B cell (primary cell): ENCODE measurements at regions of chr5 and their contacts with region 1.

Region 1: GRCh38 chr5:68170826-68171558 is 44.6 kb upstream of the PIK3R1 start:
- DNase-seq: no peak
- ATAC-seq: no peak
- H3K4me3 ChIP-seq: no peak overlapping the region
- H3K4me3 Mint-ChIP-seq: no peak overlapping the region
- H3K27ac ChIP-seq: no peak overlapping the region
- H3K27ac Mint-ChIP-seq: no peak overlapping the region
- H3K4me1 ChIP-seq: no peaks in the 10 kb centered on the region
- H3K4me1 Mint-ChIP-seq: no peaks in the 10 kb centered on the region
- H3K27me3 ChIP-seq: no peaks in the 10 kb centered on the region
- H3K27me3 Mint-ChIP-seq: no peaks in the 10 kb centered on the region
- CTCF ChIP-seq: no peak

Region 2: DNA sequence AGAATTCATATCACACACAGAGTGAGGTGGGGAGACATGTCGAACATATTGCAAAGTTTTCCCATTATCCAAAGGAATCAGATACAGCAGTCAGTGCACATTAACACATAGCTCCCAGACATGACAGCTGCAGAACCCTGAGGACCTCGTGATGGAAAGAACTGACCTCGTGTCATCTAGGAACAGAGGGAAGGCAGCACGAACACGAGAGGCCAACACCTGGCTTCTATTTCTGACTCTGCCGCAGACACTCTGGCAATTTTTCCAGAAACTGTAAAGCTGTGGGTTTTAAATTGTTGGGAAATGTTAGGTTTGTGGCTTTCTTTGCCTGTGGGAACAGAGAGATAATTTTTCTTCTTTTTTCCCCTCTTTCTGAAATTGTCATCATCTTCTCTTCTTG is 270.5 kb before region 1 on chr5:
- CTCF ChIA-PET with region 1: no interaction called
- POLR2A ChIA-PET with region 1: no interaction called
- intact Hi-C with region 1: no loop called
- DNase-seq: no peak
- ATAC-seq: no peak
- H3K4me3 ChIP-seq: no peak overlapping the region
- H3K4me3 Mint-ChIP-seq: no peak overlapping the region
- H3K27ac ChIP-seq: no peak overlapping the region
- H3K27ac Mint-ChIP-seq: no peak overlapping the region
- H3K4me1 ChIP-seq: no peaks in the 10 kb centered on the region
- H3K4me1 Mint-ChIP-seq: peaks cover 11% of the 10 kb centered on the region
- H3K27me3 ChIP-seq: no peaks in the 10 kb centered on the region
- H3K27me3 Mint-ChIP-seq: peaks cover 3% of the 10 kb centered on the region
- CTCF ChIP-seq: no peak

Region 3: DNA sequence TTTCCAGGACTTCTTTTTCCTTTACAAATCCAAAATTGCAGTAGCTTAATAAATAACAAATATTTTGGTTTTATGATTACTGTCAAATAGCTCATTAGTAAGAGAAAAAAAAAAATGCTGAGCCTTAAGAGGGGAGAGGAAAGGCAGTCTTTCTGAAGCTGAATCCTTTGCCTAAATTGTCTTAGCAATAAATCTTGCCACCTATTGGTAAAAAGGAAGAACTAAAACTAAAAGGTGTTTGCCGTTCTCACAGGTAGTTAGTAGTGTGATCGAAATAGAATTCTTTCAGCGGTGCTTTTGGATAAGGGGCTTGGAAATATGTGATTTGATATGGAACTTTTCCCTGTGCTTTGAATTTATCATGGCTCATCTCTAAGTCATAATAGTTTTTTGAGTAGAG is 75.8 kb after region 1 on chr5:
- CTCF ChIA-PET with region 1: no interaction called
- POLR2A ChIA-PET with region 1: interaction called, 11 read pairs
- intact Hi-C with region 1: no loop called
- DNase-seq: peak; percentile 30
- ATAC-seq: no peak
- H3K4me3 ChIP-seq: no peak overlapping the region
- H3K4me3 Mint-ChIP-seq: no peak overlapping the region
- H3K27ac ChIP-seq: no peak overlapping the region
- H3K27ac Mint-ChIP-seq: no peak overlapping the region
- H3K4me1 ChIP-seq: peaks cover 35 to 37% of the 10 kb centered on the region in 2 donors
- H3K4me1 Mint-ChIP-seq: peaks cover 70% of the 10 kb centered on the region
- H3K27me3 ChIP-seq: no peaks in the 10 kb centered on the region
- H3K27me3 Mint-ChIP-seq: no peaks in the 10 kb centered on the region
- CTCF ChIP-seq: peak; percentile 57